CD4-positive, alpha-beta memory T cell (primary cell): ENCODE measurements at regions of chr10 and their contacts with region 1.

Region 1: DNA sequence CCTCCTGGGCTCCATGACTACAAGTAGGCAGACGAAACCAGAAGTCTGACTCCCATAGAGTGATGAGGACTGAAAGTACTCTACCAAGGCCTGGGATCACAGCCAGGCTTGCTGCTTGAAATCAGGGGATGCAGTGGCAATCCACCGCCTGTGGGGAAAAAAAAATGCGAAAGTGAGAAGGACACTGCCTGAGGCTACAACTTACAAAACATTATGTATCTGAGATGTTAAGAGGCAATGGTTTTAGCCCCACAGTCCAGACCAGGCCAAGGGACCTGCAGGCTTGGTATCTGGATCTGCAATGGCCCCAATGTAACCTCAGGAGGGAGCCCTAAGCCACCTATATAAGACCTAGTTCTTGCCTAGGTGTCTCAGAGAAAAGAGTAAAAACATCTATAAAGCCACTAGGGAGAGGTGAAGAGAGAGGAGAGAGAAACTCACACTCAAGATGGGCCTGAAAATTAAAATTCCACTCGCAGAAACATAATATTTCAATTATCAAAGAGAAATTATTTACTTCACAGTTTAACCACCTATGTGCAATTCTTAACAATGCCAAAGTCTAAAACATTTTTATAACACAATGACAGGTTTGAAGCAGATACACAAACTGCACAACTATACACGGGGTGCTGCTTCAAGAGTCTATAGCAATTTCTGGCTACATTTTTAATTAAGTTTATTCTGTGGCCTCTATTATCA is 13.9 kb downstream of the DNAJC1 start:
- DNase-seq: peak in 4 of 5 donors; percentile 13 to 33 (median 24)
- H3K4me3 ChIP-seq: no peak overlapping the region
- H3K4me3 Mint-ChIP-seq: no peak overlapping the region
- H3K27ac ChIP-seq: no peak overlapping the region
- H3K27ac Mint-ChIP-seq: peak overlapping the region in 2 of 7 donors; percentile 52 to 94
- H3K4me1 ChIP-seq: peaks cover 5% of the 10 kb centered on the region
- H3K4me1 Mint-ChIP-seq: peaks cover 6 to 12% (median 10%) of the 10 kb centered on the region in 4 donors
- H3K27me3 ChIP-seq: no peaks in the 10 kb centered on the region
- H3K27me3 Mint-ChIP-seq: no peaks in the 10 kb centered on the region

Region 2: GRCh38 chr10:21166557-21167287 is 822.9 kb before region 1 on chr10:
- CTCF ChIA-PET with region 1: no interaction called
- POLR2A ChIA-PET with region 1: no interaction called
- intact Hi-C with region 1: no loop called
- DNase-seq: no peak
- H3K4me3 ChIP-seq: no peak overlapping the region
- H3K4me3 Mint-ChIP-seq: no peak overlapping the region
- H3K27ac ChIP-seq: no peak overlapping the region
- H3K27ac Mint-ChIP-seq: no peak overlapping the region
- H3K4me1 ChIP-seq: no peaks in the 10 kb centered on the region
- H3K4me1 Mint-ChIP-seq: no peaks in the 10 kb centered on the region
- H3K27me3 ChIP-seq: no peaks in the 10 kb centered on the region
- H3K27me3 Mint-ChIP-seq: peaks cover 0 to 5% of the 10 kb centered on the region in 2 donors

Region 3: GRCh38 chr10:21926949-21927348 is 62.7 kb before region 1 on chr10:
- CTCF ChIA-PET with region 1: no interaction called
- POLR2A ChIA-PET with region 1: no interaction called
- intact Hi-C with region 1: no loop called
- DNase-seq: no peak
- H3K4me3 ChIP-seq: no peak overlapping the region
- H3K4me3 Mint-ChIP-seq: no peak overlapping the region
- H3K27ac ChIP-seq: no peak overlapping the region
- H3K27ac Mint-ChIP-seq: peak overlapping the region in 1 of 7 donors; percentile 1
- H3K4me1 ChIP-seq: no peaks in the 10 kb centered on the region
- H3K4me1 Mint-ChIP-seq: peaks cover 0 to 4% (median under 1%) of the 10 kb centered on the region in 4 donors
- H3K27me3 ChIP-seq: no peaks in the 10 kb centered on the region
- H3K27me3 Mint-ChIP-seq: no peaks in the 10 kb centered on the region

Region 4: GRCh38 chr10:22003079-22003913 is 13.7 kb after region 1 on chr10 and contains the start of gene DNAJC1:
- CTCF ChIA-PET with region 1: interaction called, 133 read pairs
- POLR2A ChIA-PET with region 1: interaction called, 18 read pairs
- intact Hi-C with region 1: no loop called
- DNase-seq: peak; percentile 96 to 98 (median 96)
- H3K4me3 ChIP-seq: peak within 1 kb of the TSS; percentile 62 to 89
- H3K4me3 Mint-ChIP-seq: peak within 1 kb of the TSS; percentile 94 to 100 (median 98)
- H3K27ac ChIP-seq: peak within 1 kb of the TSS; percentile 84
- H3K27ac Mint-ChIP-seq: peak within 1 kb of the TSS; percentile 91 to 99 (median 97)
- H3K4me1 ChIP-seq: peaks cover 26% of the 10 kb centered on the region
- H3K4me1 Mint-ChIP-seq: peaks cover 23 to 45% (median 34%) of the 10 kb centered on the region in 4 donors
- H3K27me3 ChIP-seq: peaks cover 3% of the 10 kb centered on the region
- H3K27me3 Mint-ChIP-seq: peaks cover 0 to 4% of the 10 kb centered on the region in 2 donors
- total RNA-seq, gene DNAJC1: 15.0 to 16.7 TPM

Region 5: GRCh38 chr10:22259280-22259679 is 269.7 kb after region 1 on chr10:
- CTCF ChIA-PET with region 1: interaction called, 13 read pairs
- POLR2A ChIA-PET with region 1: no interaction called
- intact Hi-C with region 1: no loop called
- DNase-seq: peak in 3 of 5 donors; percentile 15 to 26 (median 21)
- H3K4me3 ChIP-seq: no peak overlapping the region
- H3K4me3 Mint-ChIP-seq: no peak overlapping the region
- H3K27ac ChIP-seq: no peak overlapping the region
- H3K27ac Mint-ChIP-seq: peak overlapping the region in 2 of 7 donors; percentile 7 to 43
- H3K4me1 ChIP-seq: peaks cover 15% of the 10 kb centered on the region
- H3K4me1 Mint-ChIP-seq: peaks cover 6 to 33% (median 20%) of the 10 kb centered on the region in 4 donors
- H3K27me3 ChIP-seq: no peaks in the 10 kb centered on the region
- H3K27me3 Mint-ChIP-seq: peaks cover 0 to 3% of the 10 kb centered on the region in 2 donors

Region 6: DNA sequence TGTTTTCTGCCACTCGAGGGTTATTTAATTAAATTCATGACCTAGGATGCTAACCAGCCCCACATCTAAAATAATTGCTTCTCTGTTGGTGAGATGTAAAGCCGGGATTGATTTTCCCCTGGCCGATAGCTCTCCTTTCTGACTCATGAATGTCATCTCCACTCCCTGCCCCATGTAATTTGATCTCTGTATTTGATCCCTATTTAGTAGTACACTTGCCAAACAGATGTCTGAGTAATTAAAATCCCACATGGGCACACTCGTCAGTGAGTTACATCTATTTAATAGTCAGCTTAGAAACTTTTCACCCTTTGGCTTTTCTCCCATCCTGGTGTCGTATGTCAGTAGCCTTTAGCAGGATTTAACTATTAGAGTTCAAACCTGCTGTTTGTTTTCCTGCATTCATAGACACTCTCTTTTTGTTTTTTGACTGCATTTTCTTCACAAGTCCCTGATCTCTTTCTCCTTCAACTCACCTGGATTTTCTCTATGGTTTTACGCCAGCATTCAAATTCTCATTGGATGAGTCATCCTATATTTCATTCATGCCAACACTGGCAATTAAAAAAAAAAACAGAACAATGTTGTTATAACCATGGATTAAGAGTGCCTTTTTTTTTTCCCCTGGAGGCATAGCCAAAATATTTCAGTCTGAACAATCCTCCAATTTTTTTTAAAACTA is 438.4 kb after region 1 on chr10:
- CTCF ChIA-PET with region 1: interaction called, 10 read pairs
- POLR2A ChIA-PET with region 1: no interaction called
- intact Hi-C with region 1: no loop called
- DNase-seq: no peak
- H3K4me3 ChIP-seq: no peak overlapping the region
- H3K4me3 Mint-ChIP-seq: no peak overlapping the region
- H3K27ac ChIP-seq: no peak overlapping the region
- H3K27ac Mint-ChIP-seq: no peak overlapping the region
- H3K4me1 ChIP-seq: no peaks in the 10 kb centered on the region
- H3K4me1 Mint-ChIP-seq: peaks cover 0 to 2% (median 0%) of the 10 kb centered on the region in 4 donors
- H3K27me3 ChIP-seq: no peaks in the 10 kb centered on the region
- H3K27me3 Mint-ChIP-seq: peaks cover 9 to 12% of the 10 kb centered on the region in 2 donors

Region 7: DNA sequence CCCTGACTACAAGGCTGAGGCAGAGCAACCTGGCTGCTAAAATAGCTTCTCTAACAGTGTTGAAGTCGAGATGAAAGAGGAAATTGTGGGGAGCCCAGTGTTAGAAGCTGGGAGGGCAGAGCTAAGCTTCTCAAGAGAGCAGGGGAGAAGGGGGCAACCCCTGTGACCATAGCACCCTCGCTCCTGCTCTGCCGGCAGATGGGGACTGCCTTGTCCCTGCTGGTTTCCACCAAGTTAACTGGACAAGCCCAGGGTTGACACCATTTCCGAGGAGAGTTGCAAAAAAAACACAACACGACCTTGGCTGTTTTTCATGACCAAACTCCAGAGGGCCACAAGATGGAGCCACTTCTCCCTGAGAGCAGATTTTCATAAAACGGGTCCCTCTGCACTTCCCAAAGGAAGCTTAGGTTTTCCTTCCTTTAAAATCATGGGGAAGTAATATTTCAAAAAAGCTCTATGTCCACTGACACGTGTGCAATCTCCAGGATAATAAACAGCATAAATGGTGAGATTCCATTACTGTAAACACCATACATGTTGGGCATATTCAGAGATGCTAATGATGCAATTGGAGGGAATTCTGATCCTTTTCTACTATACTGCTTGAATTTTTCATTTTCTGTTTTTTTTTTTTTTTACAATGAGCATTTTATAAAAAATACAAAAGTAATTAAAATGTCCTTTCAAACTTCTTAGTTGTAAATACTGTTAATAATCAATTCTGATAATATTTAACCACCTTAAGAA is 584.4 kb after region 1 on chr10:
- CTCF ChIA-PET with region 1: interaction called, 11 read pairs
- POLR2A ChIA-PET with region 1: no interaction called
- intact Hi-C with region 1: no loop called
- DNase-seq: peak; percentile 17 to 40 (median 21)
- H3K4me3 ChIP-seq: no peak overlapping the region
- H3K4me3 Mint-ChIP-seq: peak overlapping the region in 3 of 8 donors; percentile 9 to 77 (median 31)
- H3K27ac ChIP-seq: no peak overlapping the region
- H3K27ac Mint-ChIP-seq: peak overlapping the region; percentile 27 to 78 (median 72)
- H3K4me1 ChIP-seq: peaks cover 37% of the 10 kb centered on the region
- H3K4me1 Mint-ChIP-seq: peaks cover 39 to 77% (median 58%) of the 10 kb centered on the region in 4 donors
- H3K27me3 ChIP-seq: no peaks in the 10 kb centered on the region
- H3K27me3 Mint-ChIP-seq: no peaks in the 10 kb centered on the region

Region 8: GRCh38 chr10:23293145-23293724 is 1303.6 kb after region 1 on chr10:
- CTCF ChIA-PET with region 1: interaction called, 3 read pairs
- POLR2A ChIA-PET with region 1: no interaction called
- intact Hi-C with region 1: loop called (anchors 10 kb)
- DNase-seq: peak in 4 of 5 donors; percentile 9 to 19 (median 12)
- H3K4me3 ChIP-seq: no peak overlapping the region
- H3K4me3 Mint-ChIP-seq: no peak overlapping the region
- H3K27ac ChIP-seq: no peak overlapping the region
- H3K27ac Mint-ChIP-seq: no peak overlapping the region
- H3K4me1 ChIP-seq: no peaks in the 10 kb centered on the region
- H3K4me1 Mint-ChIP-seq: peaks cover 0 to 3% (median 0%) of the 10 kb centered on the region in 4 donors
- H3K27me3 ChIP-seq: no peaks in the 10 kb centered on the region
- H3K27me3 Mint-ChIP-seq: peaks cover 8 to 19% of the 10 kb centered on the region in 2 donors